Activated CD4-positive, alpha-beta T cell treated with anti-CD3 and anti-CD28 coated beads, Interleukin-2, amount 10 ng/mL, durations not matched to agents 24 days and 14 days (primary cell): ENCODE measurements at regions of chrX and their contacts with region 1.

Region 1: DNA sequence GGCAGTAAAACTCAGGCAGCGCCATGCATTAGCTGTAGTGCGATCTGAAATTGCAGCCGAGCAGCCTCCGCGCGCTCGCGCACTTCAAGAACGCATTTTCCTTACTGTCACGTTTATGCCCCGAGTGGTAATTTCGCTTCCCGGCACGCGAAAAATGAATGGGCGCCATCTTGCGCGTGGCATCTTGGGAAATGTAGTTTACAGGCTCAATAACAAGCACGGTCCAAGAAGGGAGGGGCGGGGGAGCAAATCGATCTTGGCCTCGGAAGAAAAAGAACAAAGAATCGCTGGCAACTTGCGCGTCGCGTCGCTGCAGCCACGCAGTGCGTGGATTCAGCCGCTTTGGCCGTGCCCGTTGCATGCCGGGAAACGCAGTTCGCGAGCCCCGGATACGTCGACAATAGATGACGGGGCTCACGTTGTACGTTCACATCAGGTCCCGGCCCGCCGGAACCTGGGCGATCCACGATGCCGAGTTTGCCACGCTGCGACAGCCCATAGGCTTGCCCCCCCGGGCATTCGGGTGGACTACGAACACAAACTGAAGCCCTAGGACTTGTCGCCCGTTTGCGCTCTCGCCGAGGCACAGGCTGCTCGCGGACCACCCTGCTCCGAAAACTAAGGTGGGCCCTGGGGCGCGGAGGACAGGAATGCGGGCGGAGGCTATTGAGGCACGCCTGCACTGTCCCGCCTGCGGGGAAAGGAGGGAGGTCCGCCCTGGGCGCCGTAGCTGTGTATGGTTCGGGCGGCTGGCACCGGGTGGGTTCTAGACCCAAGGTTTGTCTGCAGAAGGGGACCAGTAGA is at the start of gene FTSJ1:
- DNase-seq: peak; percentile 96
- H3K4me3 Mint-ChIP-seq: peak within 1 kb of the TSS; percentile 96
- H3K27ac Mint-ChIP-seq: peak within 1 kb of the TSS; percentile 93
- H3K4me1 Mint-ChIP-seq: peaks cover 28% of the 10 kb centered on the region
- H3K27me3 Mint-ChIP-seq: no peaks in the 10 kb centered on the region
- total RNA-seq, gene FTSJ1: 95.6 and 101 TPM in 2 replicates

Region 2: GRCh38 chrX:48493890-48494364 is 18.0 kb after region 1 on chrX:
- intact Hi-C with region 1: no loop called
- DNase-seq: no peak
- H3K4me3 Mint-ChIP-seq: no peak overlapping the region
- H3K27ac Mint-ChIP-seq: no peak overlapping the region
- H3K4me1 Mint-ChIP-seq: peaks cover 3% of the 10 kb centered on the region
- H3K27me3 Mint-ChIP-seq: no peaks in the 10 kb centered on the region

Region 3: DNA sequence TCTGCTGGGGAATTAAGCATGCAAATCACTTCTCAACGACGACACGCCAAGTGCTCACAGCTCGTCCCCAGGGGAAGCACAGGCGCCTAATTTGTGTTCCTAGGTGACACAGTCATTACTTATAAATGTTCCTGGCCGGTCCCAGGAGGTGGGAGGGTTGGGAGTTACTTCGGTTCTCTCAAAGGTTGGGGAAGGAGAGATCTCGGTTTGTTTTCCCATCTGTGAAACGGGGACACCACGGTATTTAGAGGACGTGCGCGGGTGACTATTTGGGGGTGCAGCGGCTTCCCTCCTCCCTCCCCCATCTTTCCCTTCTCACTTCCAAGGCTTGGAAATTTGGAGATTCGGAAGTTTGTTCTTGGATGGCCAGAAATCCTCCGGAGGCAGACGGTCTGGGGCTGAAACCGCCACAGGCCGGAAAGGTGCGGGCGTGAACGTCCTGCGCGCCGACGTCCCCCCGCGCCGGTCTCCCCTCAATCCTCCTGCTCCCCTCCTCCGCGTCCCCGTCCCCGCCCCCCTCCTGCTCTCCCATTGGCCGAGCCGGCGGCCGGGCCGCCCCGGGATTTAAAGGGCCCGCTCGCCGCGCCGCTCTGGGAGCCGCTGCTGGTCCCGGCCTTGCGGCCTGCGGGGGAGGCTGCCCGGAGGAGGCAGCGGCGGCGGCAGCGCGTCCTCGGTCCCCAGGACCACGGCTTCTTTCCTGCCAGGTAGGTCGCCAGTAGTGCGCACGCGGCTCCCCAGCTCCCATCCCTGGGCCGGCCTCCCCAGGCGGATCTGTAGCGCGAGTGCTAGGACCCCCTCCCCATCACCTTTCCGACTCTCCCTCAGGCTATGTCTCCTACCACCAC is 32.6 kb after region 1 on chrX and contains the start of gene PORCN:
- intact Hi-C with region 1: loop called (anchors 2 kb)
- DNase-seq: peak; percentile 93
- H3K4me3 Mint-ChIP-seq: peak within 1 kb of the TSS; percentile 92
- H3K27ac Mint-ChIP-seq: peak within 1 kb of the TSS; percentile 91
- H3K4me1 Mint-ChIP-seq: peaks cover 19% of the 10 kb centered on the region
- H3K27me3 Mint-ChIP-seq: peaks cover 3% of the 10 kb centered on the region
- total RNA-seq, gene PORCN: 11.5 and 12.9 TPM in 2 replicates

Region 4: GRCh38 chrX:48539345-48540027 is 63.5 kb after region 1 on chrX and contains the start of gene TBC1D25:
- intact Hi-C with region 1: loop called (anchors 1 kb)
- DNase-seq: peak; percentile 98
- H3K4me3 Mint-ChIP-seq: peak within 1 kb of the TSS; percentile 88
- H3K27ac Mint-ChIP-seq: peak within 1 kb of the TSS; percentile 96
- H3K4me1 Mint-ChIP-seq: peaks cover 17% of the 10 kb centered on the region
- H3K27me3 Mint-ChIP-seq: no peaks in the 10 kb centered on the region
- total RNA-seq, gene TBC1D25: 14.0 and 15.9 TPM in 2 replicates

Region 5: DNA sequence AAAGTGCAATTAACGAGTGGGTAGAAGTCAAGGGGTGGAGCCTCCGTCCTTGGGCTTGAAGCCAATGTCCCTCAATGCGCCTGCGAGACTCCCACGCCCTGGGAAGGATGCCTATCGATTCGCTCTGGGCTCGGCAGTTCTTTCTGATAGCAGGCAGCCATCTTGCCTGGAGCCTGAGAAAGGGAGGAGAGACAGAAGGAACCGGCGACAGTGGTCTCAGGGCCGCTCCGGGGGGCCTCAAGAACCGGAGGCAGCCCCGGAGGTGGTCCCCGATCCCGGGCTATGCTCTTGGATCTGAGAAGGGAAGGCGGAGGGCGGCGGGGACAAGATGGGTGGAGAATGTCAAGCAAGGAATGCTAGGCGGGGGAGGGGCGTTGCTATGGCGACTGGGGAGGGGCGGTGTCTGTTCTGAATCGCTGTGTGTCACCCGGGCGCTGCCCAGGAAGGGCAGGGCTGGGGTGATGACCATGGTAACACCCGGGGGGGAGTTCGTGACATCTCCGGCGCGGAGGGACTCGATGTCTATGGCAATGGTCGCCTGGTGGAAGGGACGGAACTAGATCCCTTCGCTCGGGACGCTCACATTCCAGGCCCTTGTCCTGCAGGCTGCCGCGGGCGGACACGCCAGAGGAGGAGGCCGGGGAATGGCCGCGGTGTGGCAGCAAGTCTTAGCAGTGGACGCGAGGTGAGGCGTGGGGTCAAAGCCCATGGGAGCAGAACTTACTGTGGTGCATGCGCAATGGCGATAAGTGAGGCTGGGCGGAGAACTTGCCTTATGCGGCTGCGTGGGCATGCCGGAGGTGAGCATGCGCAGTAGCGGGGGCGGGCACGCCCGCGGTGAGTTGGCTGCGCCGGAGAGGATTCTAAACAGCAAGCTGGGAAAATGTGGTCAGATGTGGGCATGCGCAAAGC is 121.6 kb after region 1 on chrX and contains the start of gene WDR13:
- intact Hi-C with region 1: loop called (anchors 1 kb)
- DNase-seq: peak; percentile 97
- H3K4me3 Mint-ChIP-seq: peak within 1 kb of the TSS; percentile 98
- H3K27ac Mint-ChIP-seq: peak within 1 kb of the TSS; percentile 100
- H3K4me1 Mint-ChIP-seq: peaks cover 13% of the 10 kb centered on the region
- H3K27me3 Mint-ChIP-seq: peaks cover 2% of the 10 kb centered on the region
- total RNA-seq, gene WDR13: 43.8 and 44.9 TPM in 2 replicates

Region 6: DNA sequence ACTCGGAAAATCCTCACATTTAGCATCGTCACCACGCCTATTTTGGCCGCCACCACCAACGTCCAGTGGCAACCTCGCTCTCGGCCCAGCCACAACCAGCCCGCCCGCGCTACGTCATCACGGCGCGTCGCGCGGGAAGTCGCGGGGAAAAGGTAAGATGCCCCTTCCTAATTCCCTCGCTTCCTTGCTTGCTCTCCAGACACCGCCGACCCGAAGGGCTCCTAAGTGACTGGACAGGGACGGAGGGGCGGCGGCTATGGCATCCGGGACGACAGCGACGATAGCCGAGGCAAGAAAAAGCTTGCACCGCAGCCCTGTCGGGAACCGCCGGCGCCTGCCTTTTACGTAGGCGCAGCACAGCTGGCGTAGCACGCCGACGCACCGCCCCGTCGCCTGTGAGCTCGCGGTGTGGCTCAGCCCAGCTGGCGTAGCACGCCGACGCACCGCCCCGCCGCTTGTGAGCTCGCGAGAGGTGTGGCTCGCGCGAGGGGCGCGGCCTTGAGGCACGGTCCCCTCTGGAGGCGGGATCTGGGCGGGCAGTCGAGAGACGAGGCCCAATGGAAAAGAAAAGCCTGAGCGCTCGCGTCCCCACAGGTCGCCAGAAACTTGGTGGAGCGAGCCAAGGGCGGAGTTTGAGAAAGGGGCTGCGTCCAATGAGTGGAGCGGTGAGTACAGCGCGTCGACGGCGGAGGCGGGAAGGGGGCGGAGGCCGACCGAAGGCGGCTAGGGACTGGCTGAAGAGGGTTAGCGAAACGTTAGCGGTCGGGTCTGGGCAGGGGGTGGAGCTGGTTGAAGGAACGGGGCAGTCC is 325.5 kb after region 1 on chrX and contains the start of gene HDAC6:
- intact Hi-C with region 1: loop called (anchors 5 kb)
- DNase-seq: peak; percentile 98
- H3K4me3 Mint-ChIP-seq: peak within 1 kb of the TSS; percentile 96
- H3K27ac Mint-ChIP-seq: peak within 1 kb of the TSS; percentile 96
- H3K4me1 Mint-ChIP-seq: peaks cover 16% of the 10 kb centered on the region
- H3K27me3 Mint-ChIP-seq: no peaks in the 10 kb centered on the region
- total RNA-seq, gene HDAC6: 50.6 and 55.2 TPM in 2 replicates